ENCODE measurements at regions of chr4 and their contacts with region 1.

Region 1: GRCh38 chr4:68175562-68176155 is 46.0 kb upstream of the TMPRSS11F start:
- DNase-seq: peak in 1 of 5 donors; percentile 22
- ATAC-seq: peak in 1 of 4 donors; percentile 44
- H3K4me3 ChIP-seq: no peak overlapping the region
- H3K27ac ChIP-seq: no peak overlapping the region
- H3K4me1 ChIP-seq: no peaks in the 10 kb centered on the region
- H3K27me3 ChIP-seq: no peaks in the 10 kb centered on the region
- CTCF ChIP-seq: peak; percentile 17 to 62 (median 46)
- POLR2A ChIP-seq: no peak

Region 2: GRCh38 chr4:67545199-67546003 is 630.3 kb before region 1 on chr4 and contains the start of gene CENPC:
- intact Hi-C with region 1: loop called in 5 of 10 experiments (anchors 10 kb)
- DNase-seq: peak; percentile 97 to 99 (median 98)
- ATAC-seq: peak; percentile 100
- H3K4me3 ChIP-seq: peak within 1 kb of the TSS; percentile 58 to 95 (median 84)
- H3K27ac ChIP-seq: peak within 1 kb of the TSS; percentile 60 to 96 (median 88)
- H3K4me1 ChIP-seq: peaks cover 0 to 36% (median 16%) of the 10 kb centered on the region in 12 donors
- H3K27me3 ChIP-seq: no peaks in the 10 kb centered on the region
- CTCF ChIP-seq: no peak
- POLR2A ChIP-seq: peak in 1 of 2 donors; percentile 81
- total RNA-seq, gene CENPC: 5.9 to 16.7 (median 9.0) TPM

Region 3: GRCh38 chr4:67746797-67747495 is 428.7 kb before region 1 on chr4:
- intact Hi-C with region 1: loop called in 8 of 10 experiments (anchors 5 to 10 kb)
- DNase-seq: no peak
- ATAC-seq: no peak
- H3K4me3 ChIP-seq: no peak overlapping the region
- H3K27ac ChIP-seq: no peak overlapping the region
- H3K4me1 ChIP-seq: no peaks in the 10 kb centered on the region
- H3K27me3 ChIP-seq: no peaks in the 10 kb centered on the region
- CTCF ChIP-seq: peak; percentile 48 to 78 (median 65)
- POLR2A ChIP-seq: no peak

Region 4: DNA sequence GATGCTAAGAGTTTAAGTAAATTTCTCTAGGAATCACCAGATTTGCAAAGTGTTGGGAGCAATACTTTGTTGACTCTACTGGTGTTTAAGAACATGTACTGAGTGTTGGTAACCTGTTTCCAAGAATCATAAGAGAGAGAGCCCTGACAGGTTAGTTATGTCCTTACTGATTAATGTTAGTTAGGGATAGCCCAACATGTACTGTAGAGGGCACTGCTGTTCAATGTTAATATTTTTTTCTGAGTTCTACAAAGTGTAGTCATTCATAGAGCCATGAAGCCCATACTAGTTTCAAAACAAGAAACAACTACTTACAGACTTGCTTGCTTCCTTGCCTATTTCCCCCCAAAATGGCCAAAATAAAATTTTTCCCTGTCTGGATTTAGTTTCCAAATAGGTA is 303.8 kb before region 1 on chr4:
- intact Hi-C with region 1: loop called in 2 of 10 experiments (anchors 5 to 10 kb)
- DNase-seq: no peak
- ATAC-seq: no peak
- H3K4me3 ChIP-seq: no peak overlapping the region
- H3K27ac ChIP-seq: no peak overlapping the region
- H3K4me1 ChIP-seq: no peaks in the 10 kb centered on the region
- H3K27me3 ChIP-seq: no peaks in the 10 kb centered on the region
- CTCF ChIP-seq: peak in 4 of 12 donors; percentile 9 to 37 (median 12)
- POLR2A ChIP-seq: no peak

Region 5: DNA sequence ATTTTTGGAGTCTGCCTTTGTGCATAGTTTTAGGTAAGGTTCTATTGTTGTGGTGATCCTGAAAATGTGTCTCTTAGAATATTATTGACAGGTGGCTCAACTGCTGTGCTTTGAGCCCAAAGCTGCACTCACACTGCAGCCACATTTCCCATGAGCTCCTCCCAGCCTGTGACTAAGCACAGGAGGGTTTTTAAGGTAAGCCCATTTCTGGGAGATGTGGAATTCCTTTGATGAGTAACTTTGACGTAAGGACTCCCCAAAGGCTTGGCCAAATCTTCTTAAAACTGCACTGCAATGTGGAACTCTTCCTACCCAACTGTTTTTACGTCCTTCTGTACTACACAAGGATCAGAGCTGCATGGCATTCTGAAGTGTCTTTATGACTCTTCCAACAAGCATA is 192.3 kb before region 1 on chr4:
- intact Hi-C with region 1: loop called in 4 of 10 experiments (anchors 5 to 10 kb)
- DNase-seq: no peak
- ATAC-seq: no peak
- H3K4me3 ChIP-seq: no peak overlapping the region
- H3K27ac ChIP-seq: no peak overlapping the region
- H3K4me1 ChIP-seq: no peaks in the 10 kb centered on the region
- H3K27me3 ChIP-seq: no peaks in the 10 kb centered on the region
- CTCF ChIP-seq: no peak
- POLR2A ChIP-seq: no peak

Region 6: GRCh38 chr4:67988991-67989390 is 186.7 kb before region 1 on chr4:
- intact Hi-C with region 1: loop called in 4 of 10 experiments (anchors 5 to 10 kb)
- DNase-seq: no peak
- ATAC-seq: no peak
- H3K4me3 ChIP-seq: no peak overlapping the region
- H3K27ac ChIP-seq: no peak overlapping the region
- H3K4me1 ChIP-seq: no peaks in the 10 kb centered on the region
- H3K27me3 ChIP-seq: no peaks in the 10 kb centered on the region
- CTCF ChIP-seq: no peak
- POLR2A ChIP-seq: no peak

Region 7: DNA sequence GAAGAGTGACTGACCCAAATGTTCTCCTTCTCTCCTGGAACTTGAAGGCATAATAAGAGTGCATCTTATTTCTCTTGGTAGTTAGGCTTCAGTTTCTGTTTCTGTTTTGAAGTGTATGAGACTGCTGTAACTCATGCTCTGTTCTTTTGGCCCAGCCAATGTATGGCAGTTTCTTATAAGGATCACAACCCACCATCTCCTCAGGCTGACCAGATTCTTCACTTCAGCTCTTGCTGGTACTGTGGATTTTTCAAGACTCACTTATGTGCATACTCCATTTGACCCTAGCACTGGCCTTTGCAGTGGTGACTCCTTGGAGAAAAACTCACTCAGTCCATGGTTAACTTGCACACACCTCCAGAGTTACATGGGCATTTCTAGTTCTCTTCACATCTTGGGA is 183.8 kb after region 1 on chr4:
- intact Hi-C with region 1: no loop called
- DNase-seq: no peak
- ATAC-seq: no peak
- H3K4me3 ChIP-seq: no peak overlapping the region
- H3K27ac ChIP-seq: no peak overlapping the region
- H3K4me1 ChIP-seq: no peaks in the 10 kb centered on the region
- H3K27me3 ChIP-seq: no peaks in the 10 kb centered on the region
- CTCF ChIP-seq: no peak
- POLR2A ChIP-seq: no peak